CD8-positive, alpha-beta T cell (primary cell): ENCODE measurements at regions of chr9 and their contacts with region 1.

Region 1: GRCh38 chr9:134135343-134136118 is at the start of gene WDR5:
- DNase-seq: peak; percentile 81 to 95 (median 90)
- ATAC-seq: peak; percentile 86
- H3K4me3 ChIP-seq: peak within 1 kb of the TSS; percentile 92 to 98
- H3K4me3 Mint-ChIP-seq: peak within 1 kb of the TSS; percentile 89
- H3K27ac ChIP-seq: peak within 1 kb of the TSS; percentile 77 to 90
- H3K27ac Mint-ChIP-seq: peak within 1 kb of the TSS; percentile 95
- H3K4me1 ChIP-seq: peaks cover 38% of the 10 kb centered on the region
- H3K4me1 Mint-ChIP-seq: peaks cover 43% of the 10 kb centered on the region
- H3K27me3 ChIP-seq: no peaks in the 10 kb centered on the region
- H3K27me3 Mint-ChIP-seq: no peaks in the 10 kb centered on the region
- CTCF ChIP-seq: no peak
- total RNA-seq, gene WDR5: 15.5 to 16.6 TPM

Region 2: GRCh38 chr9:133347985-133348717 is 787.4 kb before region 1 on chr9 and contains the starts of genes MED22 and RPL7A:
- CTCF ChIA-PET with region 1: no interaction called
- POLR2A ChIA-PET with region 1: no interaction called
- intact Hi-C with region 1: loop called in 1 of 2 experiments (anchors 10 kb)
- DNase-seq: peak; percentile 80 to 97 (median 91)
- ATAC-seq: peak; percentile 85
- H3K4me3 ChIP-seq: peak within 1 kb of the TSS; percentile 95 to 100
- H3K4me3 Mint-ChIP-seq: peak within 1 kb of the TSS; percentile 100
- H3K27ac ChIP-seq: peak within 1 kb of the TSS; percentile 87 to 93
- H3K27ac Mint-ChIP-seq: peak within 1 kb of the TSS; percentile 98
- H3K4me1 ChIP-seq: peaks cover 23% of the 10 kb centered on the region
- H3K4me1 Mint-ChIP-seq: peaks cover 39% of the 10 kb centered on the region
- H3K27me3 ChIP-seq: no peaks in the 10 kb centered on the region
- H3K27me3 Mint-ChIP-seq: no peaks in the 10 kb centered on the region
- CTCF ChIP-seq: no peak
- total RNA-seq, gene MED22: 17.8 to 21.2 TPM
- total RNA-seq, gene RPL7A: 2,612 to 2,623 TPM

Region 3: GRCh38 chr9:134024828-134025605 is 110.5 kb before region 1 on chr9 and contains the start of gene BRD3OS:
- CTCF ChIA-PET with region 1: no interaction called
- POLR2A ChIA-PET with region 1: interaction called, 4 read pairs
- intact Hi-C with region 1: loop called in 1 of 2 experiments (anchors 1 kb)
- DNase-seq: peak; percentile 81 to 98 (median 90)
- ATAC-seq: peak; percentile 96
- H3K4me3 ChIP-seq: peak within 1 kb of the TSS; percentile 71 to 92
- H3K4me3 Mint-ChIP-seq: peak within 1 kb of the TSS; percentile 80
- H3K27ac ChIP-seq: peak within 1 kb of the TSS; percentile 56 to 65
- H3K27ac Mint-ChIP-seq: peak within 1 kb of the TSS; percentile 45
- H3K4me1 ChIP-seq: peaks cover 11% of the 10 kb centered on the region
- H3K4me1 Mint-ChIP-seq: peaks cover 11% of the 10 kb centered on the region
- H3K27me3 ChIP-seq: no peaks in the 10 kb centered on the region
- H3K27me3 Mint-ChIP-seq: no peaks in the 10 kb centered on the region
- CTCF ChIP-seq: no peak
- total RNA-seq, gene BRD3OS: 3.3 to 4.2 TPM

Region 4: GRCh38 chr9:134088063-134088725 is 47.3 kb before region 1 on chr9:
- CTCF ChIA-PET with region 1: no interaction called
- POLR2A ChIA-PET with region 1: no interaction called
- intact Hi-C with region 1: no loop called
- DNase-seq: no peak
- ATAC-seq: no peak
- H3K4me3 ChIP-seq: no peak overlapping the region
- H3K4me3 Mint-ChIP-seq: no peak overlapping the region
- H3K27ac ChIP-seq: no peak overlapping the region
- H3K27ac Mint-ChIP-seq: no peak overlapping the region
- H3K4me1 ChIP-seq: no peaks in the 10 kb centered on the region
- H3K4me1 Mint-ChIP-seq: no peaks in the 10 kb centered on the region
- H3K27me3 ChIP-seq: peaks cover 0 to 2% of the 10 kb centered on the region in 2 experiments
- H3K27me3 Mint-ChIP-seq: peaks cover under 1% of the 10 kb centered on the region
- CTCF ChIP-seq: no peak